ENCODE measurements at regions of chr4 and their contacts with region 1.

Region 1: GRCh38 chr4:55554453-55555030 is 7.8 kb upstream of the CLOCK start:
- DNase-seq: no peak
- H3K4me3 Mint-ChIP-seq: no peak overlapping the region
- H3K27ac Mint-ChIP-seq: no peak overlapping the region
- H3K4me1 Mint-ChIP-seq: peaks cover 9% of the 10 kb centered on the region
- H3K27me3 Mint-ChIP-seq: peaks cover 32% of the 10 kb centered on the region

Region 2: GRCh38 chr4:54971474-54971950 is 583.0 kb before region 1 on chr4:
- intact Hi-C with region 1: loop called (anchors 5 kb)
- DNase-seq: peak; percentile 61
- H3K4me3 Mint-ChIP-seq: no peak overlapping the region
- H3K27ac Mint-ChIP-seq: no peak overlapping the region
- H3K4me1 Mint-ChIP-seq: no peaks in the 10 kb centered on the region
- H3K27me3 Mint-ChIP-seq: no peaks in the 10 kb centered on the region

Region 3: GRCh38 chr4:55184600-55185523 is 369.7 kb before region 1 on chr4:
- intact Hi-C with region 1: loop called (anchors 10 kb)
- DNase-seq: peak; percentile 65
- H3K4me3 Mint-ChIP-seq: no peak overlapping the region
- H3K27ac Mint-ChIP-seq: no peak overlapping the region
- H3K4me1 Mint-ChIP-seq: no peaks in the 10 kb centered on the region
- H3K27me3 Mint-ChIP-seq: peaks cover 4% of the 10 kb centered on the region

Measured in activated CD4-positive, alpha-beta T cell treated with anti-CD3 and anti-CD28 coated beads, Interleukin-2, amount 10 ng/mL, durations not matched to agents 24 days and 14 days (primary cell).